MCF 10A (cell line): ENCODE measurements at regions of chr10 and their contacts with region 1.

Region 1: GRCh38 chr10:14954001-14954770 is at the start of gene DCLRE1C:
- DNase-seq: peak; percentile 92
- H3K4me3 Mint-ChIP-seq: peak within 1 kb of the TSS; percentile 92
- H3K27ac Mint-ChIP-seq: peak within 1 kb of the TSS; percentile 90
- H3K4me1 Mint-ChIP-seq: peaks cover 5% of the 10 kb centered on the region
- H3K27me3 Mint-ChIP-seq: no peaks in the 10 kb centered on the region
- CTCF ChIP-seq: no peak
- total RNA-seq, gene DCLRE1C: 10.3 and 11.5 TPM in 2 replicates

Region 2: DNA sequence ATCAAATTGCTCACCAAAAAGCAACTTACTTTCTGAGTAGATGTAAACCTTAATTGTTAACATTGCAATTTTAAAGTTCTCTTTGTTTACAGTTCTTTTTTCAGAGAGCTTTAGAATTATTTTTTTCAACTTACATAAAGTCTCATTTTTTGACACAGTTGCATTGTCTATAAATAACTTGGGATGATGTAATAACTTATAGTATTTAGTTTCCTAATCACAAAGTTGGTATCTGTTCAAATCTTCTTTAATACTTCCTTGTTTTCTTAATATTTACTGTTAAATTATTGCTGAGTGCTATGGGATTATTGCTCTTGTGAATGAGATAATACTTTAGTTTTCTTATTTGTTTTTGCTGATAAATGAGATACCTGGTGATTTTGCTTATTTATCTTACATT is 94.4 kb before region 1 on chr10:
- CTCF ChIA-PET with region 1: no interaction called
- POLR2A ChIA-PET with region 1: no interaction called
- intact Hi-C with region 1: no loop called
- DNase-seq: no peak
- H3K4me3 Mint-ChIP-seq: no peak overlapping the region
- H3K27ac Mint-ChIP-seq: peak overlapping the region; percentile 7
- H3K4me1 Mint-ChIP-seq: no peaks in the 10 kb centered on the region
- H3K27me3 Mint-ChIP-seq: no peaks in the 10 kb centered on the region
- CTCF ChIP-seq: no peak

Region 3: GRCh38 chr10:14873090-14873760 is 81.0 kb before region 1 on chr10:
- CTCF ChIA-PET with region 1: interaction called, 6 read pairs
- POLR2A ChIA-PET with region 1: interaction called, 62 read pairs
- intact Hi-C with region 1: no loop called
- DNase-seq: peak; percentile 13
- H3K4me3 Mint-ChIP-seq: no peak overlapping the region
- H3K27ac Mint-ChIP-seq: no peak overlapping the region
- H3K4me1 Mint-ChIP-seq: peaks cover 13% of the 10 kb centered on the region
- H3K27me3 Mint-ChIP-seq: no peaks in the 10 kb centered on the region
- CTCF ChIP-seq: no peak

Region 4: DNA sequence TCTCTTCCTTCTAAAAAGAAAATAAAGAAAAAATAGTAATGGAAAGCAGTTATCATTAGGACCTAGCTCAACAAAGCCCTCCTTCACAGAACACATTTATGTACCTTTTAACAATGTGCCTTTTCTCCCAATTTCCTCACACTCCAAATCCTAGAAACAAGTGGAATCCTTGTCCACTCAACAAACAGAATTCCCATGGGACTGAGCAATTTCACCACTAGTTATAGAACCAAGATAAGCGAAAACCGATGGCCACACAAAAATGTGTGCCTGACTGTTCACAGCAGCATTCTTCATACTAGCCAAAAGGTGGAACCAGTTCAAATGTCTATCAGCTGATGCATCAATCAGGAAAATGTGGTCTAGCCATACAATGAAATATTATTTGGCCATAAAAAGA is 17.6 kb before region 1 on chr10:
- CTCF ChIA-PET with region 1: no interaction called
- POLR2A ChIA-PET with region 1: no interaction called
- intact Hi-C with region 1: no loop called
- DNase-seq: no peak
- H3K4me3 Mint-ChIP-seq: no peak overlapping the region
- H3K27ac Mint-ChIP-seq: no peak overlapping the region
- H3K4me1 Mint-ChIP-seq: no peaks in the 10 kb centered on the region
- H3K27me3 Mint-ChIP-seq: no peaks in the 10 kb centered on the region
- CTCF ChIP-seq: no peak

Region 5: GRCh38 chr10:15084502-15084922 is 130.3 kb after region 1 on chr10:
- CTCF ChIA-PET with region 1: interaction called, 4 read pairs
- POLR2A ChIA-PET with region 1: interaction called, 43 read pairs
- intact Hi-C with region 1: no loop called
- DNase-seq: peak; percentile 97
- H3K4me3 Mint-ChIP-seq: peak overlapping the region; percentile 92
- H3K27ac Mint-ChIP-seq: no peak overlapping the region
- H3K4me1 Mint-ChIP-seq: peaks cover 7% of the 10 kb centered on the region
- H3K27me3 Mint-ChIP-seq: no peaks in the 10 kb centered on the region
- CTCF ChIP-seq: no peak

Region 6: GRCh38 chr10:15106352-15107013 is 152.3 kb after region 1 on chr10:
- CTCF ChIA-PET with region 1: interaction called, 11 read pairs
- POLR2A ChIA-PET with region 1: interaction called, 7 read pairs
- intact Hi-C with region 1: loop called (anchors 5 kb)
- DNase-seq: peak; percentile 79
- H3K4me3 Mint-ChIP-seq: no peak overlapping the region
- H3K27ac Mint-ChIP-seq: no peak overlapping the region
- H3K4me1 Mint-ChIP-seq: no peaks in the 10 kb centered on the region
- H3K27me3 Mint-ChIP-seq: no peaks in the 10 kb centered on the region
- CTCF ChIP-seq: peak; percentile 83

Region 7: DNA sequence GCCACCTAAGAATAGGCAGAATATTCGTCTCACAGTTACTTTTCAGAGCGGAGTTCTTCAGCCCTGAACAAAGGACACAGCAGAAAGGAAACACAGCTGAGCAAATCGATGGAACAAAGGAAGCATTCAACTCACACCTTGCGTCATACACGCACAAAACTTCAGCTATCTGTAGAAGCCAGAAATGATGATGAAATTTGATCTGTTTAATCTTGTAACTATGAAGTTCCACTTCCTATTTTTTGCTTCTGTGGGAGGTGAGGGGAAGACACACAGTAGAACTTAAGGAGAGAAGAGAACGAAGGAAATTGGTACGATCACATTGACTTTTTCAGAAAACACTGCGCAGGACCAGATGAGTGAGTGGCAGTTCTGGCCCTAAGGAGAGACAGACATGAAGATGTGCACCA is 390.7 kb after region 1 on chr10:
- CTCF ChIA-PET with region 1: no interaction called
- POLR2A ChIA-PET with region 1: no interaction called
- intact Hi-C with region 1: no loop called
- DNase-seq: peak; percentile 52
- H3K4me3 Mint-ChIP-seq: peak overlapping the region; percentile 6
- H3K27ac Mint-ChIP-seq: peak overlapping the region; percentile 72
- H3K4me1 Mint-ChIP-seq: peaks cover 8% of the 10 kb centered on the region
- H3K27me3 Mint-ChIP-seq: no peaks in the 10 kb centered on the region
- CTCF ChIP-seq: no peak